ENCODE measurements at regions of chr6 and their contacts with region 1.

Region 1: GRCh38 chr6:28683944-28684538 is 158.4 kb downstream of the GPX5 start:
- DNase-seq: no peak
- ATAC-seq: no peak

Region 2: DNA sequence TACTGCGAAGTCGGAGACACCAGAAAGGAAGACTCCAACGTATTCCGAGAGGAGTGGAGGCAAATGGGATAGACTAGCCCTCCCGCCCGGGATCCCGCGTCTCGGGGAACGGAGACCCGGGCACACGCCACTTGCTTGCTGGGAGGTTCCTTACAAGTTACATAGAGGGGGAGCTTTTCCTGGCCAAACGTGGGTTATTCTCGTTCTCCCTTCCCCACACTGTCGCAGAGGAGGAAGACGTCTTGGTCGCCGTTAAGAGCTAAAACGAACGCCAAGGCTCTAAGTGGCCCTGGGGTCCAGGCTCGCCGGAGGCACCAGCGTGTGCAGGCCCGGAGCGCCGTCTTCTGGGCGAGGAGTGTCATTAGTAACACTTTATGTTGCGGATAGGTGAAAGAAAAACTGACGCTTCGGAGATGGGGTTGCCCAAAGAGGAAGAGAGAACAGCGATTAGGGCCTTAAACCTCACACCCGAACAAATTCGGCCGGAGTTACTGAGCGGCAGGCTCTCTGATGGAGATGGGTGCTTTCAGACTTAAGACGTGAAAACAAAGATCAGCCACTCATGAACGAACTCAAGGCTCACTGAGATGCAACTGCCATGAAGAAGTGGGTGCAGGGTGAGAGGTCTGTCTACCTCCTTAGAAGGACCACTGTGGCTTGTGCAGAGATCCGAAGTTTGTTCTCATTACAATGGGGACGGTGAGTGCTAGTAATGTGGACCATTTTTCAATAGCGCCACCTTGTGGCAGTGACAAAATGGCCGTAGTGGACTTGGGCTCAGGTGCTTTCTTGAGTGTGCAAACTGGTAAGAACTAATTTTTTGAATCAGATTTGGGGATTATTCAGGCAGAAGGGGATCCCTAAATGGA is 332.8 kb after region 1 on chr6:
- intact Hi-C with region 1: loop called (anchors 1 kb)
- DNase-seq: peak; percentile 80
- ATAC-seq: peak; percentile 97

Region 3: GRCh38 chr6:29589423-29590048 is 905.5 kb after region 1 on chr6:
- intact Hi-C with region 1: loop called (anchors 10 kb)
- DNase-seq: no peak
- ATAC-seq: peak; percentile 57